ENCODE measurements at regions of chr10 and their contacts with region 1.

Region 1: DNA sequence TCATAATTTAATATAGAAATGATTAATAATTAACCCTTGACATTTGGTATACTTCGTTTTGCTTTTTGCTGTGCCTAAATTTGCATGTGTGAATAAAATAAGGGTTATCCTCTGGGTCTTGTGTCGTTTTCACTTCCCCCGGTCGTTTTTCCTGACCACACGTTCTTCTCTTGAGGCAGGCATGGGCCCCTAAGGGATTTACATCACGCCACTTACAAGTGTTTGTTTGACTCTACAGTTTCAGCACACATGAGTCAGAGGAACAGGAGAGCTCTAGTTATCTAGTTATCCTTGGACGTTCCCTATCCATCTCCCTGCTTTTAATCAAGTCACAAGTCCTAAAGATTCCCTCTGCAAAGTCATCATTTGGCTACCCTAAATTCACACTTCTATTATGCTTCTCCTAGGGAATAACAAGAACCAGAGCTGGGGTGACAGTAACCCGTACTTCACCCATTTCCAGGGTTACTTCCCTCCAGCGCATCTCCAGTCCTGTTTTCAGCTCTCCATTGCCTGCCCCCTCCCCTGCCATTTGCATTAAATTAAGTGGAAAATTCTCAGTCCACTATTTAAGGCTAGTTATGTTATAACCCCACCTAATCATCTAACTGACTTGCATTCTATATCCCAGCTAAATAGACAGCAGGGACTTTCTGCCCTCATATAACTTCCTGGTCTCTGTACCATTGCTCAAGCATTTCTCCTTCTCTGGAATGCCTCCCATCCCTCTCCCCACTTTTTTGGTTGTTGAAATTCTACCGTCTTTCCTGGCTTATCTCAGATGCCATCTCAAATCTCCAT is 206.9 kb downstream of the PTEN start:
- DNase-seq: peak; percentile 92
- ATAC-seq: peak; percentile 74
- H3K4me3 ChIP-seq: 0 out of 2 replicates have a peak overlapping the region, but pooled peaks have one; percentile 18
- H3K27ac ChIP-seq: peak overlapping the region; percentile 73
- H3K4me1 ChIP-seq: peaks cover 69% of the 10 kb centered on the region
- H3K27me3 ChIP-seq: no peaks in the 10 kb centered on the region
- CTCF ChIP-seq: no peak
- EP300 ChIP-seq: peak; percentile 97 to 99; a peak in 3 of 4 replicates
- POLR2A ChIP-seq: no peak
- RAD21 ChIP-seq: peak; percentile 33; the same call in 1 of the 2 replicates

Region 2: GRCh38 chr10:87675396-87676376 is 394.6 kb before region 1 on chr10:
- CTCF ChIA-PET with region 1: no interaction called
- POLR2A ChIA-PET with region 1: no interaction called
- RAD21 ChIA-PET with region 1: no interaction called
- SMC1A ChIA-PET with region 1: no interaction called
- in situ Hi-C with region 1: no loop called
- intact Hi-C with region 1: no loop called
- DNase-seq: no peak
- ATAC-seq: no peak
- H3K4me3 ChIP-seq: no peak overlapping the region
- H3K27ac ChIP-seq: no peak overlapping the region
- H3K4me1 ChIP-seq: no peaks in the 10 kb centered on the region
- H3K27me3 ChIP-seq: no peaks in the 10 kb centered on the region
- CTCF ChIP-seq: no peak
- EP300 ChIP-seq: no peak
- POLR2A ChIP-seq: no peak
- RAD21 ChIP-seq: no peak

Region 3: DNA sequence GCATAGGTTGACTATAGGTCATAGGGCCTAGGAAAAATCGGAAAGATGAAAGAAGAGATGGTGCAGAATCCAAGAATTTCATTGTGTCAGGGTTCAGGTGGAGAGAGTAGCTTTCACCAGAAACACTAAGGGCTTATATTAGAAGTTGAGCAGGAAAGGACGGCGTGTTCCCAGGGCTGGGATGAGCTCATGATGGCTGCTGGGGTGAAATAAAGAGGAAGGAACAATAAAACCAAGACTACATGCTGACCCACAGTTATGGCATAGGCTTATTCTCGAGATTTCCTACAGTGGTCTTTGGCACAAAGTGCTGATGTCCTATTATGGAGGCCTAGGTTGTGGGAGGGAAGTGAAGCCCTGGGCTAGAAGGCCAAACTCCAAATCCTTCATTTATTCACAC is 11.1 kb before region 1 on chr10:
- CTCF ChIA-PET with region 1: interaction called, 3 read pairs
- POLR2A ChIA-PET with region 1: interaction called, 5 read pairs
- RAD21 ChIA-PET with region 1: interaction called, 10 read pairs
- SMC1A ChIA-PET with region 1: interaction called, 9 read pairs
- in situ Hi-C with region 1: no loop called
- intact Hi-C with region 1: no loop called
- DNase-seq: no peak
- ATAC-seq: no peak
- H3K4me3 ChIP-seq: no peak overlapping the region
- H3K27ac ChIP-seq: no peak overlapping the region
- H3K4me1 ChIP-seq: peaks cover 33% of the 10 kb centered on the region
- H3K27me3 ChIP-seq: no peaks in the 10 kb centered on the region
- CTCF ChIP-seq: no peak
- EP300 ChIP-seq: no peak
- POLR2A ChIP-seq: no peak
- RAD21 ChIP-seq: no peak